Sciatic nerve (tissue), 2 donors: ENCODE measurements at regions of chr12 and their contacts with region 1.

Region 1: GRCh38 chr12:117025481-117026151 is 73.6 kb downstream of the TESC start:
- DNase-seq: peak; percentile 74
- ATAC-seq: peak; percentile 79

Region 2: GRCh38 chr12:117143008-117143532 is 117.5 kb after region 1 on chr12:
- intact Hi-C with region 1: loop called (anchors 10 kb)
- DNase-seq: no peak
- ATAC-seq: no peak